ENCODE measurements at regions of chr7 and their contacts with region 1.

Region 1: GRCh38 chr7:142352543-142352942 is 94.7 kb upstream of the PRSS58 start:
- DNase-seq: no peak
- H3K4me3 ChIP-seq: no peak overlapping the region
- H3K27ac ChIP-seq: no peak overlapping the region
- H3K27me3 ChIP-seq: peaks cover 0 to 24% (median 0%) of the 10 kb centered on the region in 45 donors
- CTCF ChIP-seq: no peak

Region 2: GRCh38 chr7:142303650-142304049 is 48.9 kb before region 1 on chr7:
- intact Hi-C with region 1: loop called in 1 of 2 experiments (anchors 1 kb)
- DNase-seq: no peak
- H3K4me3 ChIP-seq: no peak overlapping the region
- H3K27ac ChIP-seq: no peak overlapping the region
- H3K27me3 ChIP-seq: peaks cover 0 to 9% (median 0%) of the 10 kb centered on the region in 45 donors
- CTCF ChIP-seq: peak in 54 of 56 donors; percentile 17 to 67 (median 45)

Measured in dorsolateral prefrontal cortex (tissue), 120 donors.